Heart left ventricle (tissue), 16 donors: ENCODE measurements at regions of chr6 and their contacts with region 1.

Region 1: GRCh38 chr6:11043961-11044711 is at the start of gene ELOVL2:
- DNase-seq: peak; percentile 32 to 73 (median 44)
- ATAC-seq: peak in 3 of 4 donors; percentile 67 to 92 (median 92)
- H3K4me3 ChIP-seq: peak within 1 kb of the TSS; percentile 50 to 83 (median 58)
- H3K27ac ChIP-seq: peak within 1 kb of the TSS in 3 of 12 donors; percentile 32 to 64 (median 46)
- H3K4me1 ChIP-seq: peaks cover 0 to 14% (median 0%) of the 10 kb centered on the region in 12 donors
- H3K27me3 ChIP-seq: peaks cover 7 to 91% (median 47%) of the 10 kb centered on the region in 9 donors
- CTCF ChIP-seq: peak in 11 of 12 donors; percentile 29 to 71 (median 55)
- POLR2A ChIP-seq: no peak
- total RNA-seq, gene ELOVL2: 1.1 to 6.1 (median 1.7) TPM

Region 2: DNA sequence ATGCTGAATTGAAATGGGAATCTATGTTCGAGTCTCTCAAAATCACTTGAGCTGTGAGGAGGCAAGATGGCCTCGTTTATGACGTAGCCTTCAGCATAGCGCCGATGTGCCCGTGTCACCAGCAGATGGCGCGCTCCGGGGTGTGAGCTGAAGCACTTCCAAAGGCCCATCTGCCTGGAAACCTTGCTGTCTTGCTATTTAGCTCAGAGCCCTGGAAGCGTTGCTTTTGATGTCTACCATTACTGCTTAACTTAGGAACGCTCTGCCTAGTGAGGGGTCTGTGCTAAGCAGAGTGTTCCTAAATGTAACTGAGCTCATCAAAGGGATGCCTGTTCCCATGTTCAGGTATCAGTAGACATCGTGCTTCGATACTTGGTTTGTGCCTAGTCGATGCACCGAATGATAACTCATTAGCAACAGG is 89.5 kb before region 1 on chr6:
- intact Hi-C with region 1: loop called in 1 of 10 experiments (anchors 2 kb)
- DNase-seq: peak; percentile 59 to 84 (median 67)
- ATAC-seq: peak in 3 of 4 donors; percentile 68 to 72 (median 71)
- H3K4me3 ChIP-seq: no peak overlapping the region
- H3K27ac ChIP-seq: no peak overlapping the region
- H3K4me1 ChIP-seq: no peaks in the 10 kb centered on the region
- H3K27me3 ChIP-seq: no peaks in the 10 kb centered on the region
- CTCF ChIP-seq: peak; percentile 50 to 81 (median 68)
- POLR2A ChIP-seq: no peak

Region 3: DNA sequence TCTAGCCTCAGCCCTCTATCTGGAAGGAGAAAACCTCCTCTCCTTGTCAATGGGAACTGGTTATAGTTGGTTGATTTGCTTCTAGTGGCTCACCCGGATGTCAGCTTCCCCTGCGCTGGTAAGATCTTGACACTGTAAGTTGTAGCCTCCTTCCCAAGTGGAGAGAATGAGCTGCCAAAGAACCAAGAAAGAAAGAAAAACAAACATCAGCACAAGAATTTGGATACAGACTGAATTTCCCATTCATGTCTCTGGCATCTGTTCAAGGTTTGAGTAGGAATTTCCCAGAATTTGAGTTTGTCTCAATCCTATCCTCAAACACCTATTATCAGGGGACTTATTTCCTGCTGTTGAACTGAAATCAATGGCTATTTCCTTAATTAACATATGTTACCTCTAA is 44.1 kb before region 1 on chr6:
- intact Hi-C with region 1: loop called in 1 of 10 experiments (anchors 5 kb)
- DNase-seq: no peak
- ATAC-seq: peak in 2 of 4 donors; percentile 53 to 63
- H3K4me3 ChIP-seq: no peak overlapping the region
- H3K27ac ChIP-seq: peak overlapping the region in 5 of 12 donors; percentile 13 to 56 (median 29)
- H3K4me1 ChIP-seq: peaks cover 0 to 15% (median 0%) of the 10 kb centered on the region in 12 donors
- H3K27me3 ChIP-seq: no peaks in the 10 kb centered on the region
- CTCF ChIP-seq: no peak
- POLR2A ChIP-seq: no peak

Region 4: GRCh38 chr6:11317885-11318771 is 274.0 kb after region 1 on chr6:
- intact Hi-C with region 1: no loop called
- DNase-seq: peak in 4 of 5 donors; percentile 44 to 79 (median 62)
- ATAC-seq: peak; percentile 40 to 88 (median 76)
- H3K4me3 ChIP-seq: no peak overlapping the region
- H3K27ac ChIP-seq: peak overlapping the region in 11 of 12 donors; percentile 10 to 69 (median 61)
- H3K4me1 ChIP-seq: peaks cover 0 to 42% (median 16%) of the 10 kb centered on the region in 12 donors
- H3K27me3 ChIP-seq: no peaks in the 10 kb centered on the region
- CTCF ChIP-seq: no peak
- POLR2A ChIP-seq: no peak